Activated T-helper 1 cell treated with anti-CD3 and anti-CD28 coated beads, Interleukin-12 subunit alpha, Interleukin-12 subunit beta, Interleukin-2, Interleukin-4 antibody, amounts not matched to agents 30 ng/mL and 10 ng/mL and 1 ng/mL, durations not matched to agents 14 hours and 24 hours and 36 hours (primary cell): ENCODE measurements at regions of chrX and their contacts with region 1.

Region 1: GRCh38 chrX:30889147-30890140 is at the start of gene TAB3:
- DNase-seq: peak; percentile 91
- H3K4me3 Mint-ChIP-seq: peak within 1 kb of the TSS; percentile 90
- H3K27ac Mint-ChIP-seq: peak within 1 kb of the TSS; percentile 96
- H3K4me1 Mint-ChIP-seq: peaks cover 32% of the 10 kb centered on the region
- H3K27me3 Mint-ChIP-seq: no peaks in the 10 kb centered on the region
- total RNA-seq, gene TAB3: 23.7 and 24.4 TPM in 2 replicates

Region 2: GRCh38 chrX:30577362-30577991 is 312.0 kb before region 1 on chrX and contains the start of gene TASL:
- intact Hi-C with region 1: loop called (anchors 1 kb)
- DNase-seq: peak; percentile 39
- H3K4me3 Mint-ChIP-seq: peak within 1 kb of the TSS; percentile 96
- H3K27ac Mint-ChIP-seq: peak within 1 kb of the TSS; percentile 98
- H3K4me1 Mint-ChIP-seq: peaks cover 27% of the 10 kb centered on the region
- H3K27me3 Mint-ChIP-seq: no peaks in the 10 kb centered on the region
- total RNA-seq, gene TASL: 7.0 and 7.6 TPM in 2 replicates

Region 3: GRCh38 chrX:30735839-30736238 is 153.6 kb before region 1 on chrX:
- intact Hi-C with region 1: loop called (anchors 1 kb)
- DNase-seq: peak; percentile 64
- H3K4me3 Mint-ChIP-seq: no peak overlapping the region
- H3K27ac Mint-ChIP-seq: no peak overlapping the region
- H3K4me1 Mint-ChIP-seq: peaks cover 11% of the 10 kb centered on the region
- H3K27me3 Mint-ChIP-seq: no peaks in the 10 kb centered on the region

Region 4: GRCh38 chrX:30900227-30900626 is 10.8 kb after region 1 on chrX:
- intact Hi-C with region 1: loop called (anchors 1 kb)
- DNase-seq: no peak
- H3K4me3 Mint-ChIP-seq: peak overlapping the region; percentile 15
- H3K27ac Mint-ChIP-seq: no peak overlapping the region
- H3K4me1 Mint-ChIP-seq: peaks cover 11% of the 10 kb centered on the region
- H3K27me3 Mint-ChIP-seq: peaks cover 8% of the 10 kb centered on the region

Region 5: GRCh38 chrX:31099536-31100090 is 210.2 kb after region 1 on chrX:
- intact Hi-C with region 1: loop called (anchors 2 kb)
- DNase-seq: peak; percentile 59
- H3K4me3 Mint-ChIP-seq: no peak overlapping the region
- H3K27ac Mint-ChIP-seq: peak overlapping the region; percentile 86
- H3K4me1 Mint-ChIP-seq: peaks cover 34% of the 10 kb centered on the region
- H3K27me3 Mint-ChIP-seq: no peaks in the 10 kb centered on the region